CD8-positive, alpha-beta memory T cell (primary cell): ENCODE measurements at regions of chr5 and their contacts with region 1.

Region 1: DNA sequence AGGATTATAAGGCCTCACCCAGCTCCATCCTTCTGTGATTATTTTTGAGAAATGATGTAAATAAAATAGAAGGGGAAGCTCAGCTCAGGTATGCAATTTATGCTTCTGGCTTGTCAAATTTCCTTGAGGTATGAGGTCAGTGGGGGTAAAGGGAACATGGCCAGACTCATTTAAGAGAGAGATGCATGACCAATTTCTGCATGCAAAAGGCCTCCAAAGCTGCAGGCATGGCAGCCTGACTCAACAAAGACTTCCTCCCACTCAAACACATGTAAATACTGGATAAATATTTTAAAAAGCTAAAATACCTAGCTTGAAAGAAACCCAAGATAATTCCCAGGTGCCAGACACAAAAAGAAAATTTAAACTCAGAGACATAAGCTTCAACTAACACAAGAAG is 101.4 kb upstream of the SLC1A3 start:
- DNase-seq: no peak
- H3K4me3 ChIP-seq: no peak overlapping the region
- H3K4me3 Mint-ChIP-seq: no peak overlapping the region
- H3K27ac ChIP-seq: no peak overlapping the region
- H3K27ac Mint-ChIP-seq: no peak overlapping the region
- H3K4me1 ChIP-seq: no peaks in the 10 kb centered on the region
- H3K4me1 Mint-ChIP-seq: no peaks in the 10 kb centered on the region
- H3K27me3 ChIP-seq: no peaks in the 10 kb centered on the region
- H3K27me3 Mint-ChIP-seq: peaks cover 7 to 18% of the 10 kb centered on the region in 2 donors

Region 2: DNA sequence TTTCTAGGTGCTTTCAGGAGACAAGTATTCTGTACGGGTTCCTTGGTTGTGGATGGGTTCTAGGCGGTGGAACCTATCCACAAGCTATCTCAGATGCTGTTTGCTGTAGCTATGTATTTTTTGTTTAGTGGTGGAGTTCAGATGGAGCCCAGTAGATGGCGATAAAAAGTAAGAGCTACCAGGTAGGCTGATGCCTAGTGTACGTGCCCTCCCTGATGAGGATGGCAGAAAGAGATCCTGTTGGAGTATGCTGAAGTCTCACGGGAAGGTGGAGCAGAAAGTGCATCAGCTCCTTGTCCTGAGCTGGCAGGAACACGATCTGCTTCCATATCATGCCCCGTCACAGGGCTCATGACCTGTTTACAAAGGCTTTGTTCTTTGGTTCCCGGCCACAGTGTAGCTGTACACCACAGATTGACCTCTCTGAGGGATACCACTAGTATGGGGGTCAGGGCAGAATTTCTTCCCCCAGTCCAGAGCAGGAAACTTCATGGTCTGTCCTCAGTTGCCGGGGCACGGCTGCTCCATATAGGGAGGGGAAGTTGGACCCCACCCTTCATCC is 425.7 kb before region 1 on chr5:
- CTCF ChIA-PET with region 1: interaction called, 14 read pairs
- POLR2A ChIA-PET with region 1: no interaction called
- DNase-seq: peak in 2 of 5 donors; percentile 7 to 12
- H3K4me3 ChIP-seq: no peak overlapping the region
- H3K4me3 Mint-ChIP-seq: no peak overlapping the region
- H3K27ac ChIP-seq: no peak overlapping the region
- H3K27ac Mint-ChIP-seq: no peak overlapping the region
- H3K4me1 ChIP-seq: no peaks in the 10 kb centered on the region
- H3K4me1 Mint-ChIP-seq: no peaks in the 10 kb centered on the region
- H3K27me3 ChIP-seq: peaks cover 8% of the 10 kb centered on the region
- H3K27me3 Mint-ChIP-seq: peaks cover 18 to 65% of the 10 kb centered on the region in 2 donors

Region 3: GRCh38 chr5:36519881-36520280 is 14.9 kb after region 1 on chr5:
- CTCF ChIA-PET with region 1: no interaction called
- POLR2A ChIA-PET with region 1: no interaction called
- DNase-seq: no peak
- H3K4me3 ChIP-seq: no peak overlapping the region
- H3K4me3 Mint-ChIP-seq: no peak overlapping the region
- H3K27ac ChIP-seq: no peak overlapping the region
- H3K27ac Mint-ChIP-seq: no peak overlapping the region
- H3K4me1 ChIP-seq: no peaks in the 10 kb centered on the region
- H3K4me1 Mint-ChIP-seq: no peaks in the 10 kb centered on the region
- H3K27me3 ChIP-seq: no peaks in the 10 kb centered on the region
- H3K27me3 Mint-ChIP-seq: peaks cover 0 to 9% of the 10 kb centered on the region in 2 donors